ENCODE measurements at regions of chr1 and their contacts with region 1.

Region 1: DNA sequence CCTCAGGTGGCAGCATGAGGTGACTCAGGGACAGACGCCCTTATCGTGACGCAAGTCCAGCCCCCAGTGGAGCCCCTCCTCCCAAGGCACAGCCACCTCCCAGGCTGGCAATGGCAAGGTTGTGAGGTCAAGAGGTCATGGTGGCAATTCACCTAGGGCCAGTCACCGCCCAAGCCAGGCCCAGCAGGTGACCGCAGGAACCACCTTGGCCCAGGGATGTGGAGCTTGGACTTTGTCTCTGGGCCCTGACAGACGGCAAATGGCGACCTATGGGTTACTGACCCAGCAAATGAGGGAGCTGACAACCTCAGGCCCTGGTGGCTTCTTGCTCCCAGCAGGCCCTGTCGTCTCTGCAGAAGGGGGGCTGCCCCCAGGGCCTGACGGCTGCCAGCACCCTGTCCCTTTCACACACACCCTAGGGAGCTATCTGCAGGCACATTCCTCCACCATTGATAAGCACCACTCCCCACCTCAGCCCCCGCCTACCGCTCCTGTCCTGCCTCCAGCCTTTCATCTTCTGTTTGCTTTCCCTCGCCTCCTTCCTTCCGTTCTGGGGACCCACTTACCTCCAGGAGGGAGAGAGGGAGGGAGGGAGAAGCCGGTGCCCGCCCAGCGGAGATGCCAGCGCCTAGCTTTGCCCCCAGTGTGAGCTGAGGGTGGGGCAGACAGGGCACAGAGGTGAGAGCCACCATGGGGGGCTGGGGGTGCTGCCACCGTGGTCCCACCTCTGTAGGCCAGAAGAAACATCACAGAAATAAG is 12.1 kb downstream of the EPHA2 start:
- DNase-seq: no peak
- ATAC-seq: no peak
- H3K4me3 ChIP-seq: no peak overlapping the region
- H3K27ac ChIP-seq: peak overlapping the region; percentile 70
- H3K4me1 ChIP-seq: peaks cover 36% of the 10 kb centered on the region
- H3K27me3 ChIP-seq: peaks cover 0 to 47% (median 2%) of the 10 kb centered on the region in 3 donors
- CTCF ChIP-seq: no peak

Region 2: GRCh38 chr1:16111771-16112595 is 31.8 kb before region 1 on chr1:
- intact Hi-C with region 1: no loop called
- DNase-seq: no peak
- ATAC-seq: peak in 2 of 4 donors; percentile 37 to 39
- H3K4me3 ChIP-seq: no peak overlapping the region
- H3K27ac ChIP-seq: no peak overlapping the region
- H3K4me1 ChIP-seq: no peaks in the 10 kb centered on the region
- H3K27me3 ChIP-seq: peaks cover 0 to 3% (median 0%) of the 10 kb centered on the region in 3 donors
- CTCF ChIP-seq: no peak

Region 3: GRCh38 chr1:16181887-16182719 is 38.4 kb after region 1 on chr1:
- intact Hi-C with region 1: loop called in 1 of 2 experiments (anchors 5 kb)
- DNase-seq: peak; percentile 84 to 90
- ATAC-seq: peak; percentile 80 to 87 (median 82)
- H3K4me3 ChIP-seq: no peak overlapping the region
- H3K27ac ChIP-seq: peak overlapping the region; percentile 68
- H3K4me1 ChIP-seq: peaks cover 6% of the 10 kb centered on the region
- H3K27me3 ChIP-seq: no peaks in the 10 kb centered on the region
- CTCF ChIP-seq: no peak

Region 4: GRCh38 chr1:16236511-16237342 is 93.0 kb after region 1 on chr1 and contains the start of gene CPLANE2:
- intact Hi-C with region 1: no loop called
- DNase-seq: peak; percentile 93 to 96
- ATAC-seq: peak; percentile 92 to 95 (median 92)
- H3K4me3 ChIP-seq: peak within 1 kb of the TSS; percentile 70
- H3K27ac ChIP-seq: peak within 1 kb of the TSS; percentile 82
- H3K4me1 ChIP-seq: peaks cover 11% of the 10 kb centered on the region
- H3K27me3 ChIP-seq: no peaks in the 10 kb centered on the region
- CTCF ChIP-seq: no peak
- total RNA-seq, gene CPLANE2: 1.0 to 5.1 (median 4.6) TPM

Measured in psoas muscle (tissue), 8 donors.